T-cell (primary cell): ENCODE measurements at regions of chr1 and their contacts with region 1.

Region 1: GRCh38 chr1:230809256-230809990 is 58.9 kb downstream of the C1orf198 start:
- DNase-seq: no peak
- ATAC-seq: no peak
- H3K4me3 ChIP-seq: no peak overlapping the region
- H3K4me3 Mint-ChIP-seq: no peak overlapping the region
- H3K27ac ChIP-seq: no peak overlapping the region
- H3K27ac Mint-ChIP-seq: no peak overlapping the region
- H3K4me1 ChIP-seq: no peaks in the 10 kb centered on the region
- H3K4me1 Mint-ChIP-seq: no peaks in the 10 kb centered on the region
- H3K27me3 ChIP-seq: peaks cover 0 to 9% of the 10 kb centered on the region in 2 experiments
- H3K27me3 Mint-ChIP-seq: peaks cover 0 to under 1% of the 10 kb centered on the region in 2 donors

Region 2: GRCh38 chr1:232780354-232780753 is 1970.9 kb after region 1 on chr1:
- CTCF ChIA-PET with region 1: interaction called in 1 of 2 experiments, 10 read pairs
- POLR2A ChIA-PET with region 1: no interaction called
- DNase-seq: no peak
- ATAC-seq: no peak
- H3K4me3 ChIP-seq: no peak overlapping the region
- H3K4me3 Mint-ChIP-seq: no peak overlapping the region
- H3K27ac ChIP-seq: no peak overlapping the region
- H3K27ac Mint-ChIP-seq: no peak overlapping the region
- H3K4me1 ChIP-seq: no peaks in the 10 kb centered on the region
- H3K4me1 Mint-ChIP-seq: no peaks in the 10 kb centered on the region
- H3K27me3 ChIP-seq: no peaks in the 10 kb centered on the region
- H3K27me3 Mint-ChIP-seq: peaks cover 0 to 6% of the 10 kb centered on the region in 2 donors